GM18951 (cell line): ENCODE measurements at regions of chr3 and their contacts with region 1.

Region 1: DNA sequence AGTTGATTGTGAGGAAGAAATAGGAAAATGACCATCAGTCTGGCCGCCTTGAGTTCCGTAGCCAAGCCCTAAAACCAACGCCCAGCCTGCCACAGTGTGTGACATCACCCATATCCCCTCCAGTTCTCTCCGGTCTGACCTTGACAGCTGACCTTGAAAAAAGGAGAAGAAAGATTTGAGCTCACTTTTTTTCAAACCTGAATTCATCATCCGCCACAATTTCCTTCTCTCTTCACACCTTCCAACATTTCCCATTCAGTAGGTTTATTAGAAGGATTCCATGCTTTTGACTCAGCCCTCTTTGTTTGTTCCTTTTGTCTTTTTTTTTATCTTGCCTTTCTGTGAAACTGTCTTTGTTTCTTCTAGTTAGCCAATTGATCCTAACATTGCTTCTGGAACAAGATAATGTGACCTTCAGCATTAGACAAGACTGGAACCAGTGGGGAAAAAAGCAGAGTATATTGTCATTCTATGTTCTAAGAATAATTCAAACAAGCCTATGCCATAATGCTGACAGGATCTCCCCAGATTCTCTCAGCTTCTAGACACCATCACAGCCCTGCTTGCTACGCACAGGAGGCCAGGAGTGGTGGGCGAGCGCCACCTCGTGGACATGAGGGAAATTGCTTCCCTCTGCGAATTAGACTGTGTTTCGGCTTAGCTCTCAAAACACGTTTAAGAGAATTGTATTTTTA is 283.1 kb downstream of the FGF12 start:
- POLR2A ChIP-seq: no peak

Region 2: DNA sequence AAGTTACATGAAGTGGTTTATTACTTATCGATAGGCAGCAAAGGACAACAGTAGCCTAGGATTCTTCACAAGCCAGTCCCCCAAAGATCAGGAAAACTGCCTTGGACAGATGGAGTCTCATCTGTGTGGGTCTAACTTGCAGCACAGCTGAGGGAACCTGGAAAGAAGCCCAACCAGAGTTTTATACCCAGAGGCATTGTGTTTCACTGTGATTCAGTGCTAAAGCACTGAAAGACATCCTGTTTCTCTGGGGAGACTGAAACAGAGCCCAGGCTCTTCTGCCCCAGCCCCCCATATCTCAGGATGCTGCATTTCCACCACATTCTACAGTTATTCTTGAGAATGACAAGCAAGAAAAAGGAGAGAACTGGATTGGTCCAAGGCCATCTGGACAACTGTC is 1031.5 kb before region 1 on chr3:
- in situ Hi-C with region 1: loop called (anchors 25 kb)
- POLR2A ChIP-seq: no peak

Region 3: DNA sequence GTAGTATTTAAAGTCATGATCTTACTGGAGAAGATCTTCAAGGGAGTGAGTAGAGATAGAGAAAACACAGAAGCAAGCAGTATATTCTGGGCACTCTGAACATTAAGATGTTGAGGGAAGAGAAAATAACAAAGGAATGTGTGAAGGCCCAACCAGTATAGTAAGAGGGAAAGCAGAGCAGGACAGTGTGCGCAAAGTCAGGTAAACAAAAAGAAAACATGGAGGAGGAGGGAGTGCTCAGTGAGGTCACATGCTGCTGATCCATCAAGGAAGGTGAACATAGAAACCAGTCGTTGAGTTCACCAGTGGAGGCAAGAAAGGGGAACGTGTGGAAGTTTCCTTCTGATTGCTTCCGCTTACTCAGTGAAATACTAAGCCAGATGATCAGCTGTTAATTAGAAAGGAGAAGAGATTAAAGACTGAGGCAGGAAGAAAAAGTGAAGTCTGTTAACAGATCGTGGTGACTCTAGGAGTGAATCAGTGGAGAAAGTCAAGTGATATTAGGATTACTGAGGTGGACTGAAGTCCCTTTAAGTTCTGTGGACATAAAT is 1196.0 kb after region 1 on chr3:
- in situ Hi-C with region 1: no loop called
- POLR2A ChIP-seq: no peak